ENCODE measurements at regions of chr3 and their contacts with region 1.

Region 1: DNA sequence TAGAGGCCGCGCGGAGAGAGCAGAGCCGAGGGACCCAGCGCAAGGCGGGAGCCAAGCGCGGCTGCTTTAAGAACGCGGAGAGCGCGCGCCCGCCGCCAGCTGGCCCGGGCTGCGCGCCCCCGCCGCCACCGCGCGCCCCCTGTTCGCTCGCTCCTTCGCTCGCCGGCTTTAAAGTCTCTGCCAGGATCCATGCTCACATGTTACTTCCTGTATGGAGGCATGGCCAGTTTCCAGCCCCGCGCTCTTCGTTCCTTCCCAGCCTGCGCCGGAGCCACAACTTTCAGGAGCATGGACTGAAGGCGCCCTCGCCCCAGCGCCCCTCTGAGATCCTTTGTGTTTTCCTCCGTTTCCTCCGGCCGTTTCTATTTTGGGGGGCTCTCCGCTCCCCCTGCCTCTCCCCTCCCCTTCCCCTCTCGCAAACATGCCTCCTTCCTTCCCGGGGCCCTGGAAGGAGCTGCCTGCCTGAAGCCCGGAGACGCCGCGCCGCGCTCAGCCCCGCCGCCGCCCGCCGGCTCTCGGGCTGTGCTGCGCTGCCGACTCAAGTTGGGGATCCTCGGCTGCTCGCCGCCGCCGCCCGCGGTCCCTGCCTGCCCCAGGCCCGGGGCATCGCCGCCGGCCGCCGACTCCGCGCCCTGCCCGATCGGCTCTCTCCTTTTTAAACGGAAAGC is at the start of gene PTPRG:
- DNase-seq: peak; percentile 91
- total RNA-seq, gene PTPRG: 34.3 TPM

Region 2: DNA sequence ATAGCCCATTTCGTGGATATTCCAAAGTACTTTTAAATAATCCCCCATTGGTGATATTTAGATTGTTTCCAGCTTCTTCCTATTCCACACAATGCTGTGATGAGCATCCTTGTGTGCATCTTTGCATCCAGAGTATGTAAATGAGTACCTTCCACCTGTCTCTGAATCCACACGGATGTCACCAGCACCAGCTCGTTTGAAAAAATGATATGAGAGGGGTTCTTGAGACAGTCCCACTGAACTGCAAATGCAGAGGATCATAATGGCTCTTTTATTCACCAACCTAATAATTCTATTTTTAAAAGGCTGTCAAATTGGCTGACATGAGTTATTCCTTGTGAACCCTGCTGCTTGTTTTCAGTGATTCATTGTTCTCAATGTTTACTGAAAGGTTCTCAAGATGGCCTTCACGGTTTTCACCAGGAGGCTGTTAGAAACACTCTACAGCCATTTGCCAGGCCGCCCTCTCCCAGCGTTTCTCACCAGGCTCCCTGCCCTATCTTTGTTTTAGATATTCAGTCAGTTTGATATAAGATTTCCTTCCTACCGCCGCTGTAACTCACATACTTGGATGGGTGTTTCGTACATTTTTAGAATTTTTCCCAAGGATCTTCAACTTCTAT is 96.9 kb before region 1 on chr3:
- intact Hi-C with region 1: no loop called
- DNase-seq: no peak

Region 3: GRCh38 chr3:61725851-61726333 is 164.4 kb after region 1 on chr3:
- intact Hi-C with region 1: loop called (anchors 5 kb)
- DNase-seq: no peak

Region 4: GRCh38 chr3:61847784-61848462 is 286.4 kb after region 1 on chr3:
- intact Hi-C with region 1: loop called (anchors 2 kb)
- DNase-seq: no peak

Region 5: GRCh38 chr3:62131592-62131991 is 570.1 kb after region 1 on chr3:
- intact Hi-C with region 1: loop called (anchors 5 kb)
- DNase-seq: no peak